CD4-positive, alpha-beta T cell (primary cell): ENCODE measurements at regions of chr15 and their contacts with region 1.

Region 1: DNA sequence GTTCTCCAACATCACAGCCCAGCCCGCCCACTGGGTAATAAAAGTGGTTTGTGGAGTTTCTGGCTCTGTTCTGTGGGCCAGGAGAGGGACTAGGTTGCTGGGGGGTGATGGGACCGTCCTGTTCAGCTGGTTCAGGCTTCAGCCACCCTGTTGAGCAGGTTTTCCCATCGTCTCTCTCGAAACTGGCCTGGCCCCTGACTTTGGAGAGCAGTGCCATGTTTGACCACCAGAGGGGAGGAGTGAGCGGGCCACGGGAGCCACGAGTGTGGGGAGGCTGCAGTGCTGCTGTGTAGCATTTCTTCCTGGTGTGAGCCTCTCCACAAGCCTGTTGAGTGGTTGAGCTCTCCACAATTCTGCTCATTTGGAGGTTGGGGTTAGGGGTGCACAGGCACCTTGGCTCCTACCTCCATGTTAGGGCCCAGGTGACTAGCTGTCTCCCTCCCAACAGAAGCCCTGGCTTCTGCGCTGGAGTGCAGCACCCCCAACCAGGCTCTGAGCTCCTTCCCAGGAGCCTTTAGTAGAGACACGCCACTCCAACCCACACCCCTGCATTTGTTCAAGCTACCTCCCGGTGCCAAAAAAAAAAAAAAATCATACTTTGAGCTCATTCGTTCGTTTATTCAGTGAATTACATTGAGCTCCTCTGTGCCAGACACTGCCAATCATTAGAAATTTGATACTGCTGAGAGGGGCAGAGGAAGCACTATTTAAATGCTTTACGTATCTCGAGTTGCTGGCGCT is 13.9 kb downstream of the SPINT1 start:
- DNase-seq: peak; percentile 63 to 87 (median 77)
- ATAC-seq: peak; percentile 96
- H3K4me3 ChIP-seq: no peak overlapping the region
- H3K4me3 Mint-ChIP-seq: no peak overlapping the region
- H3K27ac ChIP-seq: no peak overlapping the region
- H3K27ac Mint-ChIP-seq: no peak overlapping the region
- H3K4me1 ChIP-seq: peaks cover 18% of the 10 kb centered on the region
- H3K4me1 Mint-ChIP-seq: peaks cover 14% of the 10 kb centered on the region
- H3K27me3 ChIP-seq: no peaks in the 10 kb centered on the region
- H3K27me3 Mint-ChIP-seq: no peaks in the 10 kb centered on the region
- CTCF ChIP-seq: peak; percentile 85

Region 2: GRCh38 chr15:40873625-40874561 is 16.1 kb after region 1 on chr15 and contains the start of gene RHOV:
- CTCF ChIA-PET with region 1: interaction called, 31 read pairs
- POLR2A ChIA-PET with region 1: interaction called, 10 read pairs
- intact Hi-C with region 1: no loop called
- DNase-seq: peak in 13 of 14 experiments; percentile 19 to 73 (median 44)
- ATAC-seq: peak; percentile 87
- H3K4me3 ChIP-seq: peak within 1 kb of the TSS; percentile 53
- H3K4me3 Mint-ChIP-seq: peak within 1 kb of the TSS; percentile 81
- H3K27ac ChIP-seq: no peak within 1 kb of the TSS
- H3K27ac Mint-ChIP-seq: no peak within 1 kb of the TSS
- H3K4me1 ChIP-seq: peaks cover 14% of the 10 kb centered on the region
- H3K4me1 Mint-ChIP-seq: peaks cover 5% of the 10 kb centered on the region
- H3K27me3 ChIP-seq: no peaks in the 10 kb centered on the region
- H3K27me3 Mint-ChIP-seq: no peaks in the 10 kb centered on the region
- CTCF ChIP-seq: no peak
- total RNA-seq, gene RHOV: 0.36 TPM

Region 3: GRCh38 chr15:41022487-41023090 is 164.8 kb after region 1 on chr15:
- CTCF ChIA-PET with region 1: no interaction called
- POLR2A ChIA-PET with region 1: no interaction called
- intact Hi-C with region 1: loop called in 1 of 2 experiments (anchors 1 kb)
- DNase-seq: peak in 12 of 14 experiments; percentile 2 to 69 (median 27)
- ATAC-seq: peak; percentile 66
- H3K4me3 ChIP-seq: no peak overlapping the region
- H3K4me3 Mint-ChIP-seq: no peak overlapping the region
- H3K27ac ChIP-seq: no peak overlapping the region
- H3K27ac Mint-ChIP-seq: no peak overlapping the region
- H3K4me1 ChIP-seq: no peaks in the 10 kb centered on the region
- H3K4me1 Mint-ChIP-seq: no peaks in the 10 kb centered on the region
- H3K27me3 ChIP-seq: no peaks in the 10 kb centered on the region
- H3K27me3 Mint-ChIP-seq: no peaks in the 10 kb centered on the region
- CTCF ChIP-seq: peak; percentile 59

Region 4: DNA sequence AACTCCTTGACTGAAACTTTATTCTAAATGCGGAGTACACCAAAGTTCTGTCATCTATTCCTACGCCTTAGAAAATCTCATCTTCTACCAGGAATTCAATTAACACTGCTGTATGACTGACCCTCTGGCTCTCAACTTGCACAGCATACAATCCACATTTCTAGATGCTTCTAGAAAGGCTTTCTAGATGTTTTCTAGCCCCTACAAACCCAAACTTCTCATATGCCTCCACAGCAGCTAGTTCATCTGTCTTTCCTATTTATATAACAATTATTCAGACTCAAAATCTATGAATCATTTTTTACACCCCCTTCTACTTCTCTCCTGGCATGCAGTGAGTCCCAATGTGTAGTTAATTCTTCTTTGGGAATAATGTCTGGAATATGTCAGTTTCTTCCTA is 245.1 kb after region 1 on chr15:
- CTCF ChIA-PET with region 1: no interaction called
- POLR2A ChIA-PET with region 1: no interaction called
- intact Hi-C with region 1: no loop called
- DNase-seq: no peak
- ATAC-seq: no peak
- H3K4me3 ChIP-seq: no peak overlapping the region
- H3K4me3 Mint-ChIP-seq: no peak overlapping the region
- H3K27ac ChIP-seq: no peak overlapping the region
- H3K27ac Mint-ChIP-seq: peak overlapping the region; percentile 42
- H3K4me1 ChIP-seq: no peaks in the 10 kb centered on the region
- H3K4me1 Mint-ChIP-seq: peaks cover 35% of the 10 kb centered on the region
- H3K27me3 ChIP-seq: no peaks in the 10 kb centered on the region
- H3K27me3 Mint-ChIP-seq: no peaks in the 10 kb centered on the region
- CTCF ChIP-seq: no peak